H1 (cell line): ENCODE measurements at regions of chr19 and their contacts with region 1.

Region 1: GRCh38 chr19:42440357-42441048 is 2.2 kb downstream of the CXCL17 start:
- DNase-seq: peak in 1 of 2 experiments; percentile 93
- H3K4me3 ChIP-seq: no peak overlapping the region
- H3K27ac ChIP-seq: no peak overlapping the region
- H3K4me1 ChIP-seq: peaks cover 0 to 7% (median 0%) of the 10 kb centered on the region in 4 experiments; a peak in 2 of 7 replicates
- H3K27me3 ChIP-seq: no peaks in the 10 kb centered on the region; a peak in 2 of 7 replicates
- CTCF ChIP-seq: peak; percentile 88 to 89 (median 89)
- EP300 ChIP-seq: no peak
- POLR2A ChIP-seq: no peak
- RAD21 ChIP-seq: peak in 1 of 2 experiments; percentile 47; a peak in 3 of 4 replicates

Region 2: GRCh38 chr19:42423462-42424344 is 16.8 kb before region 1 on chr19:
- CTCF ChIA-PET with region 1: interaction called, 101 read pairs
- POLR2A ChIA-PET with region 1: interaction called, 24 read pairs
- DNase-seq: peak in 1 of 2 experiments; percentile 96
- H3K4me3 ChIP-seq: peak overlapping the region; percentile 58 to 68 (median 64)
- H3K27ac ChIP-seq: 0 out of 2 replicates have a peak overlapping the region, but pooled peaks have one; percentile 34
- H3K4me1 ChIP-seq: peaks cover 0 to 13% (median 4%) of the 10 kb centered on the region in 4 experiments; a peak in 5 of 7 replicates
- H3K27me3 ChIP-seq: peaks cover 13 to 41% (median 35%) of the 10 kb centered on the region in 4 experiments
- CTCF ChIP-seq: no peak
- EP300 ChIP-seq: no peak
- POLR2A ChIP-seq: peak in 1 of 2 experiments; percentile 69; a peak in 1 of 3 replicates
- RAD21 ChIP-seq: no peak

Region 3: DNA sequence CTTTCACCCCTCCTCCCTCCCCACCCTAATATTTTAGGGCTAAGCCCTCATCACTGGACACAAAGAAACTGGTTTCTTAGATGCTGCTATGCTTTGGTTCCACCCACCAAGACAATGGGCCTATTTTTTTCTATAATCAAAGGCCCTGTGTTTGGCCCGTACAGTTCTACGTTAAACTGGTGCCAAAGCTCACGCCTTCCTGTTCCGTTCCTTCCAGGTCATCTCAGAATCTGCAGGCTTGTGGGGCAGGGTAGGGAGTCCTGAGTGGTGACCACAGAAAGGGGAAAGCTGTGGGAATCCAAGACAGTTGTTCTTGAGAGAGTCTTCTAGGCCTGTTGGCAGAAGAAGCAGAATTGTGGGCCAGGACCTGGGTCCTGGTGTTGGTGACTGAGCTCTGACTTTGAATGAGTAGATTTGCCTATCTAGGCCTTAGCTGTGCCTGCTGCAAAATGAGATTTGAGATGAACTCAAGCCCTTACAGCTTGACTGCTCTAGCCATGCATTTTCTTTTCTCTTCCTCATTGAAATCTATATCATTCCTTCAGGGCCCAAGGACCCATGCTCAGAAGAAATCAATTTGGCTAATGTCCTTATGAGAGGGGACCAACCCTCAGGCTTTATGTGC is 21.3 kb after region 1 on chr19:
- CTCF ChIA-PET with region 1: interaction called, 19 read pairs
- POLR2A ChIA-PET with region 1: interaction called, 3 read pairs
- DNase-seq: no peak
- H3K4me3 ChIP-seq: no peak overlapping the region
- H3K27ac ChIP-seq: no peak overlapping the region
- H3K4me1 ChIP-seq: peaks cover 0 to 2% (median under 1%) of the 10 kb centered on the region in 4 experiments; a peak in 3 of 7 replicates
- H3K27me3 ChIP-seq: no peaks in the 10 kb centered on the region
- CTCF ChIP-seq: no peak
- EP300 ChIP-seq: no peak
- POLR2A ChIP-seq: no peak
- RAD21 ChIP-seq: no peak

Region 4: GRCh38 chr19:42474743-42475142 is 34.2 kb after region 1 on chr19:
- CTCF ChIA-PET with region 1: interaction called, 16 read pairs
- POLR2A ChIA-PET with region 1: interaction called, 4 read pairs
- DNase-seq: no peak
- H3K4me3 ChIP-seq: no peak overlapping the region
- H3K27ac ChIP-seq: peak overlapping the region; percentile 70
- H3K4me1 ChIP-seq: peaks cover 14 to 40% (median 34%) of the 10 kb centered on the region in 4 experiments
- H3K27me3 ChIP-seq: no peaks in the 10 kb centered on the region
- CTCF ChIP-seq: no peak
- EP300 ChIP-seq: no peak
- POLR2A ChIP-seq: no peak
- RAD21 ChIP-seq: no peak

Region 5: GRCh38 chr19:42540071-42540553 is 99.6 kb after region 1 on chr19:
- CTCF ChIA-PET with region 1: interaction called, 10 read pairs
- POLR2A ChIA-PET with region 1: interaction called, 4 read pairs
- DNase-seq: peak in 1 of 2 experiments; percentile 61
- H3K4me3 ChIP-seq: peak overlapping the region in 1 of 4 experiments; percentile 18; a peak in 1 of 8 replicates
- H3K27ac ChIP-seq: no peak overlapping the region
- H3K4me1 ChIP-seq: peaks cover 4 to 12% (median 9%) of the 10 kb centered on the region in 4 experiments
- H3K27me3 ChIP-seq: no peaks in the 10 kb centered on the region; a peak in 3 of 7 replicates
- CTCF ChIP-seq: no peak
- EP300 ChIP-seq: no peak
- POLR2A ChIP-seq: no peak
- RAD21 ChIP-seq: no peak

Region 6: GRCh38 chr19:42563352-42564210 is 123.1 kb after region 1 on chr19:
- CTCF ChIA-PET with region 1: interaction called, 19 read pairs
- POLR2A ChIA-PET with region 1: no interaction called
- DNase-seq: no peak
- H3K4me3 ChIP-seq: no peak overlapping the region
- H3K27ac ChIP-seq: no peak overlapping the region
- H3K4me1 ChIP-seq: peaks cover 2 to 8% (median 3%) of the 10 kb centered on the region in 4 experiments; a peak in 6 of 7 replicates
- H3K27me3 ChIP-seq: no peaks in the 10 kb centered on the region
- CTCF ChIP-seq: peak in 2 of 3 experiments; percentile 74 to 84; a peak in 3 of 4 replicates
- EP300 ChIP-seq: no peak
- POLR2A ChIP-seq: no peak
- RAD21 ChIP-seq: peak; percentile 72 to 75